ENCODE measurements at regions of chr7 and their contacts with region 1.

Region 1: DNA sequence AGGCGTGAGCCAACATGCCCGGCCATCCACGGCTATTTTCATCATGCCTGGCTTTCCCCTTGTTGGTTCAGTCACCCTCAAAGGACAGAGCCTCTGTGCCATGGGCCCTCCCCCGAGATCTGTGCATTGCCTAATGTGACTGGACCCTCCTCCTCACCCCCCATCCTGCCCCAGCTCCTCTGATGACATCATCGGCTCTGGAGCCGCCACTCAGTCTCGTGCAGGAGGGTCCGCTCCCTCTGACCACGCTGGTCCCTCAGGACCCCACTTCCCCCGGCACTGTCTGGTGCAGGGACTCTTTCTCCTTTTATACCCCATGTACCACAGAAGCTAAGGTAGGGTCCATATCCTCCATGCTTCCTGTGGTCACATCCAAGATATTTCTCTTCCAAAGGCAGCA is 33.2 kb upstream of the BAIAP2L1 start:
- DNase-seq: no peak
- H3K4me3 ChIP-seq: no peak overlapping the region
- H3K27ac ChIP-seq: no peak overlapping the region
- H3K4me1 ChIP-seq: no peaks in the 10 kb centered on the region
- H3K27me3 ChIP-seq: no peaks in the 10 kb centered on the region
- CTCF ChIP-seq: no peak

Region 2: DNA sequence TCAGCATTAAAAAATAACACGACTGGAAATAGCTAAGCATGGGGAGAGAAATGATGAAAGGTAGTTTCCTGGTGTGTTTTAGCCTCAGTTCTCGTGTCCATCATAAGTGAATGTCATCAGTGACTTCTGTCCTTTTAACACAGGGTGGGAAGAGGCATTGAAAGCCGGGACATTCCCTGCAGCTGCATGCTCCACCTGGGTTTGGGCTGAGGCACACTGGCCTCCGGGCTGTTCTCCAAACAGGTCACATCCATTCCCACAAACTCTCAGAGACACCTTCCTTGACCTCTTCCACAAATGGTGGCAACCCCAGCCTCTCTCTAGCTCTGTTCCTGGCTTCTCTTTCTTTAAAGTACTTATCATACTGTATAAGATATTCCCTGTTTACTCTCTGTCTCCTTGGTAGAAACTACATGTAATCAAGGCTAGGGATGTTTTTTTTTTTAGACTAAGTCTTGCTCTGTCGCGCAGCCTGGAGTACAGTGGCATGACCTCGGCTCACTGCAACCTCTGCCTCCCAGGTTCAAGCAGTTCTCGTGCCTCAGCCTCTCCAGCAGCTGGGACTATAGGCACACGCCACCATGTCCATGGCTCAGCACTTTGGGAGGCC is 55.8 kb before region 1 on chr7:
- CTCF ChIA-PET with region 1: no interaction called
- POLR2A ChIA-PET with region 1: no interaction called
- intact Hi-C with region 1: no loop called
- DNase-seq: no peak
- H3K4me3 ChIP-seq: no peak overlapping the region
- H3K27ac ChIP-seq: no peak overlapping the region
- H3K4me1 ChIP-seq: no peaks in the 10 kb centered on the region
- H3K27me3 ChIP-seq: no peaks in the 10 kb centered on the region
- CTCF ChIP-seq: no peak

Region 3: GRCh38 chr7:98745722-98746318 is 311.7 kb after region 1 on chr7:
- CTCF ChIA-PET with region 1: no interaction called
- POLR2A ChIA-PET with region 1: no interaction called
- intact Hi-C with region 1: loop called (anchors 1 kb)
- DNase-seq: peak; percentile 75
- H3K4me3 ChIP-seq: no peak overlapping the region
- H3K27ac ChIP-seq: no peak overlapping the region
- H3K4me1 ChIP-seq: no peaks in the 10 kb centered on the region
- H3K27me3 ChIP-seq: peaks cover 15% of the 10 kb centered on the region
- CTCF ChIP-seq: peak; percentile 95

Measured in A673 (cell line).